Heart right ventricle (tissue), 16 donors: ENCODE measurements at regions of chr12 and their contacts with region 1.

Region 1: DNA sequence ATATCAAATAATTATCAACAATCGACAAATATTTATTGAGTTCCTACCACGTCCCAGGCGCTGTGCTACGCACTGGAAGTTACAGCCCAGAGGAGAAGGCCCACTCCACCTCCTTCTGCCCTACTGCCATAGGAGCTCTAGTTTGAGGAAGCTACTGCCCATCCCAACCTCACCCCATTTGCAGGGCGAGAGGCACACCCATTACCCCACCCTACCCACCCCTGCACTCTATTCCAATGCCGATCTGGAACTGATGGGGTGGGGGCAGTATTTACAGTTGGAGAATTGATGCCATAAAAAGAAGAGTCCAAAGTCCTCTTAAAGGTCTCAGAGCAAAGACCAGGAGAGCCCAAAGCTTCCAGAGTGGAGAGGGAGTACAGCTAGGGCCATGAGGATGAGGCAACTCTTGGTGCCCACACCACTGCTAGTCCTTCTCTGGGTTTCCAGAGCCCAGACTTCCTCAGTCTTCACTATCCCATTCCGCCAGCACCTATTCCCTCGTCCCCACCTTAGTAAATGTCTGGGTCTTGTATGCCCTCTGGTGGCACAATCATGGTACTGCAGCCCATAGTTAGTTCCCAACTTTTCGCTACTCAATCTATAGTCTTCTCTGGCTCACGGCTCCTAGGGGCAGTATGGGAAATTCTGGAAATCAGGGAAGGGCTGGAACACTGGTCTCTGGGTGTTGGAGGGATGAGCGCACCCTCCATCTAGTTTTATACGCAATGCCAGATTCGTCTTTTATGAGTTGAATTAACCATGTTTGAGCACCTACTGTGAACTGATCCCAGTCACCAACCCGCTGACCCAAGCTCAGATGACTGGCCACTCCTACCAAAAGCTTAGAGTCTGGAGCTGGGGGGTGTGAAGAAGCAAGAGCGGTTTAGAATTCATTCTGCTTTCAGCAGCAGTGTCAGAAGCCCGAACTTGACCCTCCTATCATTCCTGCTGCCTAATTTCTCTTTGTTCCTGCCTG is 6.9 kb upstream of the ADCY6 start:
- DNase-seq: peak in 1 of 2 donors; percentile 70
- ATAC-seq: peak; percentile 84 to 93 (median 90)
- H3K4me3 ChIP-seq: no peak overlapping the region
- H3K27ac ChIP-seq: no peak overlapping the region
- H3K4me1 ChIP-seq: peaks cover 0 to 9% (median 0%) of the 10 kb centered on the region in 9 donors
- H3K27me3 ChIP-seq: peaks cover 0 to 9% (median 4%) of the 10 kb centered on the region in 7 donors
- CTCF ChIP-seq: peak; percentile 88 to 96 (median 94)

Region 2: DNA sequence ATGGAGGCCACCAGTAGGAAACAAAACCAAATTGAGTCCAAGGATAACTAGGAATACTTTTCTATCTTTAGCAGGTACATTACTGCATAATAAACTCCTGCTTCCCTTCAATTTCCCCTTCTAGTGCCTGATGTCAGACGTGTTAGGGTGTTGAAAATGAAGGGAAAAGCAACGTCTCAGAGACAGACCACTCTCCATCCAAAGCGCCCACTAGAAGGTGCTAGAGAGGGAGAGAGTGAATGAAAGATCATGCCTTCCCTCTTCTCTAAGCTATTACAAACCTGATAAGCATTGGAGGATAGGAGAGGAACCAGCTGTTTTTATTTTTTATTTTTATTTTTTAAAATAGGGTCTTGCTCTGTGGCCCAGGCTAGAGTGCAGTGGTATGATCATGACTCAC is 509.1 kb before region 1 on chr12:
- intact Hi-C with region 1: no loop called
- DNase-seq: peak in 1 of 2 donors; percentile 6
- ATAC-seq: no peak
- H3K4me3 ChIP-seq: no peak overlapping the region
- H3K27ac ChIP-seq: no peak overlapping the region
- H3K4me1 ChIP-seq: peaks cover 0 to 27% (median 0%) of the 10 kb centered on the region in 9 donors
- H3K27me3 ChIP-seq: peaks cover 0 to 20% (median 3%) of the 10 kb centered on the region in 7 donors
- CTCF ChIP-seq: peak in 7 of 9 donors; percentile 33 to 59 (median 47)

Region 3: DNA sequence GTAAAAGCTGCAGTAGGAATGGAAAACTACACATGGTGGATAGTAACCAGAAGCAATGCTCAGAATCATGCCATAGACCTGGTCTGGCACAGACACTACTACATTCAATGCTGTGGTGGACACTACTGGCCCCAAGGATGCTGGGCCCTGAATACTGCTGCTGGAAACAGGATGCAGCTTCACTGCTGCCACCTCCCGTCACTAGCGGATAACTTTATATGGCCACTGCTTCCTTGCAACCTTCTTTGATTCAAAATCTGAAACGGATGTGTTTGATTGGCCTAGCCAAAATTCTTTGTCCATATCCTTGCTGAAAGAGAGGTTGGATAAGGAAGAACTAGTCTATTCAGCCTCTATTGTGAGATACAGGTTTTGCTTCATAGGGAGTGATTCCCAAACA is 37.5 kb before region 1 on chr12:
- intact Hi-C with region 1: loop called (anchors 1 to 2 kb)
- DNase-seq: no peak
- ATAC-seq: peak in 1 of 8 donors; percentile 38
- H3K4me3 ChIP-seq: no peak overlapping the region
- H3K27ac ChIP-seq: no peak overlapping the region
- H3K4me1 ChIP-seq: peaks cover 0 to 7% (median 0%) of the 10 kb centered on the region in 9 donors
- H3K27me3 ChIP-seq: no peaks in the 10 kb centered on the region
- CTCF ChIP-seq: no peak

Region 4: GRCh38 chr12:48988030-48988649 is 192.4 kb after region 1 on chr12:
- intact Hi-C with region 1: no loop called
- DNase-seq: peak in 1 of 2 donors; percentile 67
- ATAC-seq: peak in 7 of 8 donors; percentile 34 to 62 (median 54)
- H3K4me3 ChIP-seq: no peak overlapping the region
- H3K27ac ChIP-seq: no peak overlapping the region
- H3K4me1 ChIP-seq: peaks cover 0 to 20% (median 7%) of the 10 kb centered on the region in 9 donors
- H3K27me3 ChIP-seq: peaks cover 0 to 93% (median 67%) of the 10 kb centered on the region in 7 donors
- CTCF ChIP-seq: peak; percentile 71 to 95 (median 82)